Endothelial cell of umbilical vein (primary cell): ENCODE measurements at regions of chr7 and their contacts with region 1.

Region 1: DNA sequence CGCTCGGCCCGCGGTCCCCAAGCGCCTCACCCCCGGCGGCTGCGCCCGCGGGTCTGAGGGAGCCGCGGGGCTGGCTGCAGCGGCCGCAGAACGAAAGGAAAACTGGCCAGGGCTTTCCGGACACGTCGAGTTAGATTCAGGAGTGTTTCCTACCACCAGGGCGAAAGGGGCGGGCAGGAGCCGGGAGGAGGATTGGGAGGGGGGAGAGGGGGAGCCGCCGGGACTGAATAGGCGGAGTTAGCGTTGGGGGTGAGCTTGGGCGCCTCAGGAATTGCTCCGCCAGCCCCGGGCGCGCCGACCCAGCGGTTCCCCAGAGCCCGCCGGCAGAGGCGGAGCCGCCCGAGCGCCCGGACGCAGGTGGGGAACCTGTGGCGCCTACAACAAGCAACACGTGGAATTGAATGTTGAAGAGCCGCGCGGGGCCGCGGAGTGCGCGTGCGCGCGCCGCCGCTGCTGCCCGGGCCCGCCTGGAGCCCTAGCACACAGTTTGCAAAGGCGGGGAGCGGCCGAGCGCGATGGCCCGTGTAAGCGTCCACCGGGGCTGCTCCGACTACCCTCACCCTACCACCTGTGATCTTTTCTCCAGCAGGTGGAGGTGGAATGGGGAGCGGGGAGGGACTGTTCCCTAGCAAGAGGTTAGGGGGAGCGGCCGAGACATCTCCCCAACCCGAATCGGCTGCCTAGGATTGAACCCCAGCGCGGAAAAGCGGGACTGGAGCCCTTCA is at the start of gene CADPS2:
- DNase-seq: peak; percentile 92
- H3K4me3 ChIP-seq: peak within 1 kb of the TSS; percentile 51 to 92 (median 70)
- H3K27ac ChIP-seq: peak within 1 kb of the TSS; percentile 66
- H3K4me1 ChIP-seq: peaks cover 26% of the 10 kb centered on the region
- H3K27me3 ChIP-seq: no peaks in the 10 kb centered on the region
- CTCF ChIP-seq: peak; percentile 13 to 46
- POLR2A ChIP-seq: peak; percentile 84
- total RNA-seq, gene CADPS2: 20.0 and 22.6 TPM in 2 replicates

Region 2: DNA sequence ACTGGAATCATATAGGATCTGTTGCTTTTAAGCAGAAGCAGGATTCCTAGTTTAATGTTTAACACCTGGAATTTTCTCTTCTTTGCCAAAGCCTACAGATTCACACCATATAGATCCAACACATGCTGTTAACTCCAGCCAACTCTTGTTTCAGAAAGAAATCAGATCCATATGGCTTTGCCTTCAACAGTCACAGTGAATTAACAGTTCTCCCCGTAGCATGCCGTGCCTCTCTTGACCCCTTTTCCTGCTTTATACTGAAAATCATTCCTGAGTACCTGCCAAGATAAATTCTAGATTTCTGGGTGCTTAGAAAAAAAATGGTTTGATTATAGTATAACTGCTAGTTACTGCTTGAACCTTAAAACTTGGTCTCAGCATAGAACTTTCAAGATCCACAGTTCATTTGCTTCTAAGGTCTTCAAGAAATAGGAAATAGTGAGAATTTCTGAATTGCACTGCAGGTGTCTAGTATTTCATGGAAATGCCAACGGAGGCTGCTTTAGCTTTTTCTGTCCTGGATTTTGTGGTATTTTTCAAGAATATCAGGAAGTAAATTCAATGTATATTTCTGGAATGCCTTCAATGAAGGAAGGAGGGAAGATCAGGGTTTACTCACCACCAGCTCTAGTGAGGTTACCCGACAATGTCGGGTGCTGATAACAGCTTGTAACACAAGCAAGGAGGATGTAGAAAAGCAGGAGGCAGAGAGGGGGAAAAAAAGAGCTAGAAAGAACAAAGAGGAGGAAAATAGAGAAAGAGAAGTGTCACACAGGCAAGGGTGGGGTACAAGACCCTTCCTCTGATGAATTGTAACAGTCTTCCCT is 749.1 kb before region 1 on chr7:
- CTCF ChIA-PET with region 1: no interaction called
- POLR2A ChIA-PET with region 1: no interaction called
- dilution Hi-C with region 1: no loop called
- intact Hi-C with region 1: loop called (anchors 5 kb)
- DNase-seq: peak; percentile 77
- H3K4me3 ChIP-seq: peak overlapping the region; percentile 12 to 70 (median 49)
- H3K27ac ChIP-seq: peak overlapping the region; percentile 33
- H3K4me1 ChIP-seq: peaks cover 18% of the 10 kb centered on the region
- H3K27me3 ChIP-seq: no peaks in the 10 kb centered on the region
- CTCF ChIP-seq: no peak
- POLR2A ChIP-seq: no peak

Region 3: GRCh38 chr7:122310119-122311021 is 576.1 kb before region 1 on chr7:
- CTCF ChIA-PET with region 1: no interaction called
- POLR2A ChIA-PET with region 1: no interaction called
- dilution Hi-C with region 1: no loop called
- intact Hi-C with region 1: loop called (anchors 5 kb)
- DNase-seq: peak; percentile 38
- H3K4me3 ChIP-seq: peak overlapping the region; percentile 13 to 33 (median 23)
- H3K27ac ChIP-seq: no peak overlapping the region
- H3K4me1 ChIP-seq: peaks cover 14% of the 10 kb centered on the region
- H3K27me3 ChIP-seq: peaks cover 85 to 100% of the 10 kb centered on the region in 2 experiments
- CTCF ChIP-seq: no peak
- POLR2A ChIP-seq: no peak

Region 4: DNA sequence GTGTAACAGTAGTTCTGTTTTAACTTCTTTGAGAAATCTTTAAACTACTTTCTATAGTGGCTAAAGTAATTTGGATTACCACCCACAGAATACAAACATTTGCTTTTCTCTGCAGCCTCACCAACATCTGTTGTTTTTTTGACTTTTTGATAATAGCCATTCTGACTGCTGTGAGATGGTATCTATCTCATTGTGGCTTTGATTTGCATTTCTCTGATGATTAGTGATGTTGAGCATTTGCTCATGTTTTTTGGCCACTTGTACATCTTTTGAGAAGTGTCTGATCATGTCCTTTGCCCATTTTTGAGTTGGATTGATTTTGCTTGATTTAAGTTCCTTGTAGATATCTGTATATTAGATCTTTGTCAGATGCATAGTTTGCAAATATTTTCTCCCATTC is 254.3 kb before region 1 on chr7:
- CTCF ChIA-PET with region 1: no interaction called
- POLR2A ChIA-PET with region 1: no interaction called
- dilution Hi-C with region 1: no loop called
- intact Hi-C with region 1: loop called (anchors 5 kb)
- DNase-seq: no peak
- H3K4me3 ChIP-seq: no peak overlapping the region
- H3K27ac ChIP-seq: no peak overlapping the region
- H3K4me1 ChIP-seq: peaks cover 3% of the 10 kb centered on the region
- H3K27me3 ChIP-seq: no peaks in the 10 kb centered on the region
- CTCF ChIP-seq: no peak
- POLR2A ChIP-seq: no peak

Region 5: GRCh38 chr7:122803323-122803722 is 83.2 kb before region 1 on chr7:
- CTCF ChIA-PET with region 1: interaction called, 70 read pairs
- POLR2A ChIA-PET with region 1: interaction called, 8 read pairs
- dilution Hi-C with region 1: no loop called
- intact Hi-C with region 1: loop called (anchors 1 kb)
- DNase-seq: peak; percentile 74
- H3K4me3 ChIP-seq: no peak overlapping the region
- H3K27ac ChIP-seq: peak overlapping the region; percentile 46
- H3K4me1 ChIP-seq: peaks cover 16% of the 10 kb centered on the region
- H3K27me3 ChIP-seq: no peaks in the 10 kb centered on the region
- CTCF ChIP-seq: peak; percentile 35
- POLR2A ChIP-seq: no peak

Region 6: GRCh38 chr7:122827763-122828162 is 58.8 kb before region 1 on chr7:
- CTCF ChIA-PET with region 1: no interaction called
- POLR2A ChIA-PET with region 1: no interaction called
- dilution Hi-C with region 1: no loop called
- intact Hi-C with region 1: no loop called
- DNase-seq: no peak
- H3K4me3 ChIP-seq: no peak overlapping the region
- H3K27ac ChIP-seq: no peak overlapping the region
- H3K4me1 ChIP-seq: no peaks in the 10 kb centered on the region
- H3K27me3 ChIP-seq: no peaks in the 10 kb centered on the region
- CTCF ChIP-seq: no peak
- POLR2A ChIP-seq: no peak

Region 7: DNA sequence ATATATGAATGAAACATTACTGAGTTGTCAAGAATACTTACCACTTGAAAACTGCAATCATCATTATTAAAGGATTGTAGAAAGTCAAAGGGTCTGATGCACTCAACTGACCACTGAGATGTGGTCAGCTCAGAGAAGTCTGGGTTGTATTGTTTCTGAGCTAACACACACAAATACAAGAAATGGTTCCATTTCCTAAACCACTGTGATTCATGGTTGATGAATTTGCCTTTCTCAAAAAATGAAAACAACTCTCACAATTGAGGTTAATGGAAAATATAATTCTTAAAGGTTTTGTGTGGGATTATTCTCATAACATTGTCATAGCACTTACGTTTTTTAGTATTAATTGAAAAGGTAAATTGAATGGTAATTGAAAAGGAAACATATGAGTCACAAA is 154.6 kb after region 1 on chr7:
- CTCF ChIA-PET with region 1: no interaction called
- POLR2A ChIA-PET with region 1: no interaction called
- dilution Hi-C with region 1: no loop called
- intact Hi-C with region 1: loop called (anchors 1 kb)
- DNase-seq: peak; percentile 94
- H3K4me3 ChIP-seq: no peak overlapping the region
- H3K27ac ChIP-seq: peak overlapping the region; percentile 84
- H3K4me1 ChIP-seq: peaks cover 20% of the 10 kb centered on the region
- H3K27me3 ChIP-seq: no peaks in the 10 kb centered on the region
- CTCF ChIP-seq: no peak
- POLR2A ChIP-seq: no peak